Activated T-helper 1 cell treated with anti-CD3 and anti-CD28 coated beads, Interleukin-12 subunit alpha, Interleukin-12 subunit beta, Interleukin-2, Interleukin-4 antibody, amounts not matched to agents 30 ng/mL and 10 ng/mL and 1 ng/mL, durations not matched to agents 14 hours and 24 hours and 36 hours (primary cell): ENCODE measurements at regions of chr2 and their contacts with region 1.

Region 1: GRCh38 chr2:190970873-190971506 is 43.0 kb downstream of the STAT1 start:
- DNase-seq: no peak
- H3K4me3 Mint-ChIP-seq: no peak overlapping the region
- H3K27ac Mint-ChIP-seq: peak overlapping the region; percentile 57
- H3K4me1 Mint-ChIP-seq: peaks cover 48% of the 10 kb centered on the region
- H3K27me3 Mint-ChIP-seq: no peaks in the 10 kb centered on the region

Region 2: DNA sequence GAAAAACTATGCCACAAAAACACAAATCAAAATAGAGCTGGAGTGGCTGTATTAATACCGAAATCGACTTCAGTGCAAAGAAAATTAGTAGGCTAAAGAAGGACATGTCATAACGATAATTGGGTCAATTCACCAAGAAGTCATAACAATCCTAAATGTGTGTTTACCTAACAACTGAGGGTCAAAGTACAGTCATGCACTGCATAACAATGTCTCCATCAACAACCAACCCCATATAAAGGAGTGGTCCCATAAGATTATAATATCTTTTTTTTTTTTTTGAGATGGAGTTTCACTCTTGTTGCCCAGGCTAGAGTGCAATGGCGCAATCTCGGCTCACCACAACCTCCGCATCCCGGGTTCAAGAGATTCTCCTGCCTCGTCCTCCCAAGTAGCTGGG is 234.6 kb before region 1 on chr2:
- intact Hi-C with region 1: no loop called
- DNase-seq: no peak
- H3K4me3 Mint-ChIP-seq: no peak overlapping the region
- H3K27ac Mint-ChIP-seq: no peak overlapping the region
- H3K4me1 Mint-ChIP-seq: no peaks in the 10 kb centered on the region
- H3K27me3 Mint-ChIP-seq: peaks cover 2% of the 10 kb centered on the region

Region 3: DNA sequence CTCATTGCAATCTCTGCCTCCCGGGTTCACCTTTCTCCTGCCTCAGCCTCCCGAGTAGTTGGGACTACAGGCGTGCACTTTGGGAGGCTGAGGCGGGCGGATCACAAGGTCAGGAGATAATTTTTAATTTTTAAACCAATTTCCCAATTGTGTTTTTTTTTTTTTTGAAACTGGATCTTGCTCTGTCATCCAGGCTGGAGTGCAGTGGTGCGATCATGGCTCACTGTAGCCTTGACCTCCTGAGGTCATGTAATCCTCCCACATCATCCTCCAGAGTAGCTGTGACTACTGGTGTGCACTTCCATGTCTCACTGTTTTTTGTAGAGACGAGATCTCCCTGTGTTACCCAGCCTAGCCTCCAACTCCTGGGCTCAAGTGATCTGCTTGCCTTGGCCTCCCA is 41.1 kb before region 1 on chr2:
- intact Hi-C with region 1: loop called (anchors 2 kb)
- DNase-seq: no peak
- H3K4me3 Mint-ChIP-seq: no peak overlapping the region
- H3K27ac Mint-ChIP-seq: no peak overlapping the region
- H3K4me1 Mint-ChIP-seq: peaks cover 5% of the 10 kb centered on the region
- H3K27me3 Mint-ChIP-seq: no peaks in the 10 kb centered on the region